Activated CD4-positive, alpha-beta T cell treated with anti-CD3 and anti-CD28 coated beads, Interleukin-2, amount 10 ng/mL, durations not matched to agents 24 days and 14 days (primary cell): ENCODE measurements at regions of chr1 and their contacts with region 1.

Region 1: DNA sequence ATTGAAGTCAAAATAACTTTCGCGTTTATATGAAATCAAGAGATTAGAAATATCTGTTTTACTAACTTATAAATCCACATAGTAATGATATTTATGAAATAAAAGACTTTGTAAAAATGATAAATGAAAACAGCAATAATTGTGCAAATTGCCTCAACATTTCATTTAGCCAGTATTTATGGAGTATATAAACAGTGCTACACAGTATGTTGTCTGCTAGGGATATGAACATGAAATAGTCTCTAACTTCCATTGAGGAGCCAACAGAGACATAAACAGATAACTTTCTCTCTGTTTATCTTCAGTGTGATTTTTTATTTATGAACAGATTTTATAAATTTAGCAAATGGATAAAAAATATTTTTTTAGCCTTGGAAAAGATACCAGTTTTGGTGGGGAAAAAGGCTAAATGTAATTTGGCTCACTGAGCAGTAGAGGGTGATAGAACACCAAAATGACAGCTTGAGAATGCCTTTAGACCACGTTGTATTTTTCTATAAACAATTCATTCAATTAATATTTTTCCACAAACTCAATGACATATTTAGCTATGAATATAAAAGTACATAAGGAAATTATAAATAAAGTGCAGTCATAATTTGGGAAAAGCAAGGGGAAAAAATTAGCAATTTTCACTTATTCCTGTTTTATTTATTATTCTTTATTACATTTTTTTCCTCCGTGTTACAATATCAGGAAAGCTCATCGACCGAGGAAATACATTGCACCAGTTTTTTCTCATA is 47.5 kb upstream of the EEIG2 start:
- DNase-seq: no peak
- H3K4me3 Mint-ChIP-seq: no peak overlapping the region
- H3K27ac Mint-ChIP-seq: no peak overlapping the region
- H3K4me1 Mint-ChIP-seq: no peaks in the 10 kb centered on the region
- H3K27me3 Mint-ChIP-seq: peaks cover 55% of the 10 kb centered on the region

Region 2: DNA sequence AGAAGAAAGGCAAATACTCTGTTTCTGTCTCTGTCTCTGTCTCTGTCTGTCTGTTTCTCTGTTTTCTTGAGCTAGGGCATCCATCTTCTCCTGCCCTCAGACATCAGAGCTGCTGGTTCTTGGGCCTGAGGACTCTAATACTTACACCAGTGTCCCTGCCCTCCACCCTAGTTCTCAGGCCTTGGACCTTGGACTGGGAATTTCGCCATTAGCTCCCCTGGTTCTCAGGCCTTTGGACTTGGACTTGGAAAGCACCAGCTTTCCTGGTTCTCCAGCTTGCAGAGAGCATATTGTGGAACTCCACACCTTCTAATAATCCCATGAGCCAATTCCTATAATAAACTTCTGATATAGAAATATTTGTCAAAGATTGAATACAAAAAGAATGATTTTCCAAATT is 29.7 kb before region 1 on chr1:
- intact Hi-C with region 1: no loop called
- DNase-seq: no peak
- H3K4me3 Mint-ChIP-seq: no peak overlapping the region
- H3K27ac Mint-ChIP-seq: no peak overlapping the region
- H3K4me1 Mint-ChIP-seq: no peaks in the 10 kb centered on the region
- H3K27me3 Mint-ChIP-seq: peaks cover 4% of the 10 kb centered on the region

Region 3: GRCh38 chr1:108590957-108591356 is 78.5 kb after region 1 on chr1:
- intact Hi-C with region 1: no loop called
- DNase-seq: peak; percentile 71
- H3K4me3 Mint-ChIP-seq: no peak overlapping the region
- H3K27ac Mint-ChIP-seq: peak overlapping the region; percentile 43
- H3K4me1 Mint-ChIP-seq: peaks cover 19% of the 10 kb centered on the region
- H3K27me3 Mint-ChIP-seq: no peaks in the 10 kb centered on the region

Region 4: DNA sequence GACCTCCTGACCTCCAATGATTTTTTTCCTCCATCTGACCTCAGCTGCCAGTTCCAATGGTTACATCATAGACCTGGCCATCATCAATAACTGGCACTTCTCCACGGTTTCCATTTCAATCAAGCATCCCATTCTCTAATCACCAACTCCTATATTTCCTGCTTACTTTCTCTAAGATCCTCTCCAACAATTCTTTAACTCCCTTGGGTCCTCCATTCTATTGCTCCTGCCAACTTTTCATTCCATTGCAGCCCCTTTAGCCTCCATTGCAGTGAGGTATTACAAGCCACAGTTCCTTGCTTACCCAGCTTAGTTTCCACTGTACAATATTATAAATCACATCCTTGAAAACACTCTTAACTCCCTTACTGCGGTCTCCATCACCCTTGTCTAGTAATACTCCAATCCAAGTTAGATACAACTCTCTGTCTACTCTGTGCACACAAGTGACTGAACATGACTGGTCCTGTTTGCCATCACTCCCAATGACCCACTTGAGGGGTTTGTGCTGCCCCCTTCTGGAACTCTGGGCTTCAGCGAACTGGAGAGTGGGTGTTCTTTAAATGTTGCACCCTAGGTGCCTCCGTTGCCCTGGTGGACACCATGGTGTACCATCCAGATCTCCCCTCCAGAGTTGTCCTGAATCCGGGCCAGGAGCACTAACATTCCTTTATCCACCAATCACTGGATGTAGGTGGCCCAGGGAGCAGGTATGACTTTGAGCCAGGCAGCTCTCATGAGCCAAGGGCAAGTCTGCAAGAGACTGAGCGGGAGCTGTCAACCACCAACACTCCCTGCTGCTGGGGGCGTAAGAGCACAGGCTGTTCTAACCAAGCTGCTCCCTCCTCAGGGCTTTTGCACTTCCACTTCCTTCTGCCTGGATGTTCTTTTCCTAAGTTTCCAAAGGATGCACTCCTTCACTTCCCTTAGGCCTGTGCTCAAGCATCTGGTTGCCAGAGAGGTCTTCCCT is 196.6 kb after region 1 on chr1:
- intact Hi-C with region 1: loop called (anchors 5 kb)
- DNase-seq: peak; percentile 87
- H3K4me3 Mint-ChIP-seq: no peak overlapping the region
- H3K27ac Mint-ChIP-seq: no peak overlapping the region
- H3K4me1 Mint-ChIP-seq: peaks cover 19% of the 10 kb centered on the region
- H3K27me3 Mint-ChIP-seq: peaks cover 16% of the 10 kb centered on the region

Region 5: GRCh38 chr1:108746372-108747205 is 234.2 kb after region 1 on chr1 and contains the start of gene STXBP3:
- intact Hi-C with region 1: no loop called
- DNase-seq: peak; percentile 100
- H3K4me3 Mint-ChIP-seq: peak within 1 kb of the TSS; percentile 97
- H3K27ac Mint-ChIP-seq: peak within 1 kb of the TSS; percentile 97
- H3K4me1 Mint-ChIP-seq: peaks cover 27% of the 10 kb centered on the region
- H3K27me3 Mint-ChIP-seq: peaks cover 1% of the 10 kb centered on the region
- total RNA-seq, gene STXBP3: 41.1 and 48.9 TPM in 2 replicates

Region 6: DNA sequence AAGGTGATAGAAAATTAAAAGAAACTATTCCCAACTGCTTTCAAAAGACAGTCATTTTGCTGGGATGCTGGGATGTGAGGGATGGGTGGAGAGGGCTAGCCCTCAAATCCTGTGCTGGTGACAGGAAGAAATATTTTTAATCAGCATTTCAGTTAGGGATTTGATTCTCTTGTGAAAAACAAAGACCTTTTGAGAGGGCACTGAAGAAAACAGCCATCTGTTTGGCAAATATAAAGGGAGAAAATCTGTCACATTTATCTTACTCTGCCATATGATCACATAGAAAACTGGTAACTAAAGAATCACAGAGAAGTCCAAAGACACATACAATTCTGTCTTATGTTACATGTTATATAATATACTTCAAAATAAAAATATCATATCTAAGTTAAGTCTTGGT is 246.4 kb after region 1 on chr1:
- intact Hi-C with region 1: no loop called
- DNase-seq: no peak
- H3K4me3 Mint-ChIP-seq: no peak overlapping the region
- H3K27ac Mint-ChIP-seq: no peak overlapping the region
- H3K4me1 Mint-ChIP-seq: peaks cover 3% of the 10 kb centered on the region
- H3K27me3 Mint-ChIP-seq: no peaks in the 10 kb centered on the region